HepG2 (cell line): ENCODE measurements at regions of chr15 and their contacts with region 1.

Region 1: GRCh38 chr15:83559310-83559966 is 94.5 kb upstream of the ADAMTSL3 start:
- DNase-seq: peak; percentile 48
- ATAC-seq: peak; percentile 79
- H3K4me3 ChIP-seq: no peak overlapping the region
- H3K27ac ChIP-seq: no peak overlapping the region
- H3K4me1 ChIP-seq: no peaks in the 10 kb centered on the region
- H3K27me3 ChIP-seq: peaks cover 0 to 8% of the 10 kb centered on the region in 2 experiments; a peak in 2 of 5 replicates
- CTCF ChIP-seq: peak; percentile 83
- EP300 ChIP-seq: no peak
- POLR2A ChIP-seq: no peak
- RAD21 ChIP-seq: peak; percentile 33

Region 2: DNA sequence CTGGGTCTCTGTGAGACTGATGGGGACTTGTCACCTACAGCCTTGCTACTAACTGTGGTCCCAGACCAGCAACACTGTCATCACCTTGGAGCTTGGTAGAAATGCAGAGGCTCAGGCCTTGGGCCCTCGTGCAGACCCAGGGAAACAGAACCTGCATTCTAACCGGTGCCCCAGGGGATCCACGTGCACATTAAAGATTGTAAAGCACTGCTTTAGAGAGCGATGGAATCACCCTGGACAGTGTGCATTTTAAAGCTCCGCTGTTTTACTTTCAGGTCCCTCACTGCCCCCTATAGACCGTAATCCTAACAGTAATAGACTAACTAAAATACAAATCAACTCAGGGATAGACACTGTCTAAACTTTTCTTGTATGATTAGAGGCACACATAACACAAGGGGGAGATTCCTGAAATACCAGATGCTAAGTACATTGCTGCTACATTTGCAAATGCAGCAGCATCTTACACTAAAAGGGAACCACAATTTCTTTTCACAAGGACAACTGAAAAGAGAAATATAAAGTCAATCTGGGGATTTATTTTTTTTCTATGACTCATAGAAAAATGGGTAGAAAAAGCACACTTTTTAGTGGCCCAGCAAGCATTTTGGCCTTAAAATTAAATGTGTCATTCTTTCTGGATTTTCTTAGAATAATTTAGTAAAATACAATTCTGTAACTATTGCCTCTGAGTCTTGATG is 122.8 kb before region 1 on chr15:
- CTCF ChIA-PET with region 1: interaction called, 13 read pairs
- POLR2A ChIA-PET with region 1: no interaction called
- in situ Hi-C with region 1: loop called (anchors 5 kb)
- intact Hi-C with region 1: loop called (anchors 1 kb)
- DNase-seq: peak; percentile 7
- ATAC-seq: peak; percentile 77
- H3K4me3 ChIP-seq: no peak overlapping the region
- H3K27ac ChIP-seq: no peak overlapping the region
- H3K4me1 ChIP-seq: no peaks in the 10 kb centered on the region
- H3K27me3 ChIP-seq: peaks cover 1 to 12% of the 10 kb centered on the region in 2 experiments; a peak in 1 of 5 replicates
- CTCF ChIP-seq: peak; percentile 38
- EP300 ChIP-seq: no peak
- POLR2A ChIP-seq: no peak
- RAD21 ChIP-seq: no peak

Region 3: DNA sequence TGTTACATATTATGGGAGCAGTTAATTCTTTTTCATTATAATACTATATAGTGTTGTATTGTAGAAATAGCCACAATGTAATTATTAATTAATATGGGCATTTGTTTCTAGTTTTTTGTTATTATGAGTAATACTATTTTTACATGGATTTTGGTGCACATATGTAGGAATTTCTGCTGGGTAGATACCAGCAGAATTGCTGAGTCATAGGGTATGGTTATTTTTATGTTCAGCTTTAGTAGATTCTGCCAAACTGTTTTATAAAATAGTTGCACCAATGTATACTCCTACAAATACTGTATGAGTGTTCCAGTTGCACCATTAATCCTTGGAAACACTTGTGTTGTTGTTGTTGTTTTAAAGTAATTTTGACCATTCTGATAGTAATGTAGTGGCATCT is 20.8 kb before region 1 on chr15:
- CTCF ChIA-PET with region 1: no interaction called
- POLR2A ChIA-PET with region 1: no interaction called
- in situ Hi-C with region 1: no loop called
- intact Hi-C with region 1: no loop called
- DNase-seq: no peak
- ATAC-seq: no peak
- H3K4me3 ChIP-seq: no peak overlapping the region
- H3K27ac ChIP-seq: no peak overlapping the region
- H3K4me1 ChIP-seq: no peaks in the 10 kb centered on the region
- H3K27me3 ChIP-seq: no peaks in the 10 kb centered on the region
- CTCF ChIP-seq: no peak
- EP300 ChIP-seq: no peak
- POLR2A ChIP-seq: no peak
- RAD21 ChIP-seq: no peak

Region 4: DNA sequence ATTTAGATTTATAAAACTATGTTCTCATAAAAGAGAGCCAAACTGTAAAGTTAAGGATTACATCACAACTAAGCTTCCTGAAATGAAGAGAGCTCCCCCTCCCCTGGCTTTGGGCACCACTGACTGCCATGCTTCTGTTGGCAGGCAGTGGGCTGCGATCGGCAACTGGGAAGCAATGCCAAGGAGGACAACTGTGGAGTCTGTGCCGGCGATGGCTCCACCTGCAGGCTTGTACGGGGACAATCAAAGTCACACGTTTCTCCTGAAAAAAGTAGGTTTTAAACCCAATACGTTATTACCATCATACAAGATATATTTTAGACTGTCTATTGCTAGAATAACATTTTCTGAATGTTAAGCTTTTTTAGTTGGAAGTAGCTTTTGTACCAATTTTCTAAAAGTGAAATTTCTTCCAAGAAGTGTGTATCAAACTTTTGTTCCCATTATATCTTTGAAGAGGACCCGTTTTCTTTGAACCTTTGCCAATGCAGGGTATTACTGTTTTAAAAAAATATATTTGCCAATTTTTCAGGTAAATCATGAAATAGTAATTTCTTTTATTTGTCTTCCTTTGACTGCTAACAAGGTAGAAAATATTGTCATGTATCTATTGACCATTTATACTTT is 278.6 kb after region 1 on chr15:
- CTCF ChIA-PET with region 1: no interaction called
- POLR2A ChIA-PET with region 1: no interaction called
- in situ Hi-C with region 1: loop called (anchors 10 kb)
- intact Hi-C with region 1: no loop called
- DNase-seq: peak; percentile 5
- ATAC-seq: peak; percentile 82
- H3K4me3 ChIP-seq: no peak overlapping the region
- H3K27ac ChIP-seq: no peak overlapping the region
- H3K4me1 ChIP-seq: no peaks in the 10 kb centered on the region
- H3K27me3 ChIP-seq: no peaks in the 10 kb centered on the region
- CTCF ChIP-seq: peak; percentile 68
- EP300 ChIP-seq: no peak
- POLR2A ChIP-seq: no peak
- RAD21 ChIP-seq: no peak

Region 5: GRCh38 chr15:84035399-84035766 is 475.9 kb after region 1 on chr15:
- CTCF ChIA-PET with region 1: no interaction called
- POLR2A ChIA-PET with region 1: no interaction called
- in situ Hi-C with region 1: loop called (anchors 25 kb)
- intact Hi-C with region 1: no loop called
- DNase-seq: peak; percentile 6
- ATAC-seq: peak; percentile 78
- H3K4me3 ChIP-seq: no peak overlapping the region
- H3K27ac ChIP-seq: no peak overlapping the region
- H3K4me1 ChIP-seq: no peaks in the 10 kb centered on the region
- H3K27me3 ChIP-seq: no peaks in the 10 kb centered on the region
- CTCF ChIP-seq: peak; percentile 50
- EP300 ChIP-seq: no peak
- POLR2A ChIP-seq: no peak
- RAD21 ChIP-seq: no peak